Mammary epithelial cell (primary cell): ENCODE measurements at regions of chr10 and their contacts with region 1.

Region 1: DNA sequence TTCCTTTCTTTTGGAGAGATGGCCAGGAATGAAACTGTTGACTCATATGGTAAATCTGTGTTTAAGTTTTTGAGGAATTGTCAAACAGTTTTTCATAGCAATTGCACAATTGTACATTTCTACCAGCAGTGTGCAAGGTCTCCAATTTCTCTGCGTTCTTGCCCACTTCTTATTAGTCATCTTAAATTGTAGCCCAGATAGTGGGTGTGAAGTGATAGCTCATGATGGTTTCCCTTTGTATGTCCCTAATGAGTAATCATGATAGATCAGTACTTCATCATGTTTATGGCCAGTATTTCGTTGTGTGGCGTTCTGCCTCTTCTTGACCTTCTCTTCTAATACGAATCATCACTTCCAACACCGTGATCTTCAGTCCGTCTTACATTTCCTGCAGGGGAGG is 136.3 kb downstream of the DOCK1 start:
- DNase-seq: peak; percentile 90
- H3K4me3 ChIP-seq: no peak overlapping the region
- H3K27ac ChIP-seq: peak overlapping the region; percentile 17
- H3K4me1 ChIP-seq: peaks cover 42% of the 10 kb centered on the region
- H3K27me3 ChIP-seq: no peaks in the 10 kb centered on the region
- CTCF ChIP-seq: no peak

Region 2: GRCh38 chr10:126839094-126839761 is 202.3 kb before region 1 on chr10:
- CTCF ChIA-PET with region 1: no interaction called
- dilution Hi-C with region 1: no loop called
- in situ Hi-C with region 1: no loop called
- intact Hi-C with region 1: no loop called
- DNase-seq: no peak
- H3K4me3 ChIP-seq: no peak overlapping the region
- H3K27ac ChIP-seq: no peak overlapping the region
- H3K4me1 ChIP-seq: no peaks in the 10 kb centered on the region
- H3K27me3 ChIP-seq: no peaks in the 10 kb centered on the region
- CTCF ChIP-seq: no peak

Region 3: DNA sequence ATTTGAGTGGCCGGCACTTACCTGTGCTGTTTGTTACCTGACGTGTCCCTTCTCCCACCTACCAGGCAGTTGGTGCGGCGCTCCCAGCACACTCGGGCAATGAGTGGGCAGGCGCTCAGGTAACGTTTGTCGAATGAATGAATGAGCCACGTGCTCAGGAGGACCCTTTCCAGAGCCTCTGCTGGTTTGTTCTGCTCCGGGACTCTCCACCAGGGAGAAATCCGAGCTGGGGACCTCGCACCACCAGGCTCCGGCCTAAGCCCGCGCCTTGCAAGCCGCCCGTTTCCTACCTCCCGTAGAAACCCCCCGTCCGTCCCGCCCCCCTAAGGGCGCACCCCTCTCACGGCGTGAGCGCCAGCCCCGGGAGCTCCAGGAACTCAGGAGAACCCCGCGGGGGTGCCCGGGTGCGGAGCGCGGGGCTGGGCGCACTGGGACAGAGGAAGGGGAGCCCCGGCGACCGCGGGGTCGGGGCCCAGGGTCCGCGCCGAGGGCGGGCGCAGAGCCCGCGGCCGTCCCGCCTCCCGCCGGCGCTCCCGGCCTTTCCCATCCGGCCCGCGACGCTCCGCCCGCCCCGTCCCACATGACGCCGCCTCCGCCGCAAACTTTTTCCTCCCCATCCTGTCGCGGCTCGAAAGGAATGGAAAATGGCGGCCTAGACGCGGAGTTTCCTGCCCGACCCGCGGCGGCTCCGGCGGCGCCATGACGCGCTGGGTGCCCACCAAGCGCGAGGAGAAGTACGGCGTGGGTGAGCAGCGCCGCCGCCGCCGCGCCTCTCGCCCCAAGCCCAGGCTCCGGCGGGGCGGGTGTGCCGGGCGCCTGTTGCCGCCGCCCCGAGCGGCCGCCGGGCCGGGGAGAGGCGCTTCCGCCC is 136.5 kb before region 1 on chr10 and contains the start of gene DOCK1:
- CTCF ChIA-PET with region 1: no interaction called
- dilution Hi-C with region 1: no loop called
- in situ Hi-C with region 1: no loop called
- intact Hi-C with region 1: loop called (anchors 5 kb)
- DNase-seq: peak; percentile 70
- H3K4me3 ChIP-seq: peak within 1 kb of the TSS; percentile 65 to 76 (median 75)
- H3K27ac ChIP-seq: peak within 1 kb of the TSS; percentile 56
- H3K4me1 ChIP-seq: peaks cover 41% of the 10 kb centered on the region
- H3K27me3 ChIP-seq: no peaks in the 10 kb centered on the region
- CTCF ChIP-seq: no peak
- total RNA-seq, gene DOCK1: 58.1 to 115 TPM

Region 4: DNA sequence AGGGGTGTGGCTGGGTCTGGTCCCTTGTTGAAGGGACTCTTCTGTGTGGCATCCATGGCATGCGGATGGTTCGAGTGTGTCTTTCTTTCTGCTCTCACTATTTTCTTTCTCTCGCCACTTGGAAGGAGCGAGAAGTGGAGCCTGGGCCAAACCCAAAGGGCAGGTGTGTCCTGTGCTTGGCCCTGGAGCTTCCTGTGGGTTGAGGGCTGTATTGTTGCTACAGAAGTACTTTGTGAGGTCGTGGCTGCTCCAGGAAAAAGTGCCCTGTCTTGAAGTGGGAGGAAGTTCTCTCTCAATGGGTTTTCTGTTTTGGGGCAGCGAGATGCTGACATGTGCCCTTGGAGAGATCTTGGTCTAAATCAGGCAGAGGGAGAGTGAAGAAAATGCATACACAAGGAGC is 64.3 kb before region 1 on chr10:
- CTCF ChIA-PET with region 1: no interaction called
- dilution Hi-C with region 1: loop called (anchors 5 kb)
- in situ Hi-C with region 1: no loop called
- intact Hi-C with region 1: no loop called
- DNase-seq: no peak
- H3K4me3 ChIP-seq: no peak overlapping the region
- H3K27ac ChIP-seq: no peak overlapping the region
- H3K4me1 ChIP-seq: peaks cover 23% of the 10 kb centered on the region
- H3K27me3 ChIP-seq: no peaks in the 10 kb centered on the region
- CTCF ChIP-seq: no peak

Region 5: DNA sequence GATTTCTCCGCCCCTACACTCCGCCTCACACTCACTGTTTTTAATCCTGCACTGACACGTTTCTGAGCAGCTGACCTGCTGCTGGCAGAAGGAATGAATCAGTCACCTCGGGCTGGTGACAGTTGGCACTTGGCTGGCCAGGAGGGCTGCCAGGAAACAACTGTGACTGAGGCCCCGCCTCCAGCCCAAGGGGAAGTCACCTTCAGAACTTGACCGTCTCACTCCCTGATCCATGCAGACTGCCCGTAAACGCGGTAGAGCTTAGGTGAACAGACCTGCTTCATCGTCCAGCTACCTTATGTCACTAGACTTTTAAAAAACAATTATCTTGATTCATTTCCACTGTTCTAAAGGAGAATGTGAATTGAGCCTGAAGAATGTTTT is 28.8 kb before region 1 on chr10:
- CTCF ChIA-PET with region 1: no interaction called
- dilution Hi-C with region 1: no loop called
- in situ Hi-C with region 1: no loop called
- intact Hi-C with region 1: loop called (anchors 1 kb)
- DNase-seq: peak; percentile 87
- H3K4me3 ChIP-seq: no peak overlapping the region
- H3K27ac ChIP-seq: no peak overlapping the region
- H3K4me1 ChIP-seq: peaks cover 22% of the 10 kb centered on the region
- H3K27me3 ChIP-seq: no peaks in the 10 kb centered on the region
- CTCF ChIP-seq: no peak

Region 6: GRCh38 chr10:127148066-127148932 is 106.7 kb after region 1 on chr10:
- CTCF ChIA-PET with region 1: no interaction called
- dilution Hi-C with region 1: no loop called
- in situ Hi-C with region 1: no loop called
- intact Hi-C with region 1: loop called (anchors 2 kb)
- DNase-seq: peak; percentile 82
- H3K4me3 ChIP-seq: no peak overlapping the region
- H3K27ac ChIP-seq: peak overlapping the region; percentile 90
- H3K4me1 ChIP-seq: peaks cover 63% of the 10 kb centered on the region
- H3K27me3 ChIP-seq: no peaks in the 10 kb centered on the region
- CTCF ChIP-seq: no peak